Ascending aorta (tissue), 2 donors: ENCODE measurements at regions of chr18 and their contacts with region 1.

Region 1: DNA sequence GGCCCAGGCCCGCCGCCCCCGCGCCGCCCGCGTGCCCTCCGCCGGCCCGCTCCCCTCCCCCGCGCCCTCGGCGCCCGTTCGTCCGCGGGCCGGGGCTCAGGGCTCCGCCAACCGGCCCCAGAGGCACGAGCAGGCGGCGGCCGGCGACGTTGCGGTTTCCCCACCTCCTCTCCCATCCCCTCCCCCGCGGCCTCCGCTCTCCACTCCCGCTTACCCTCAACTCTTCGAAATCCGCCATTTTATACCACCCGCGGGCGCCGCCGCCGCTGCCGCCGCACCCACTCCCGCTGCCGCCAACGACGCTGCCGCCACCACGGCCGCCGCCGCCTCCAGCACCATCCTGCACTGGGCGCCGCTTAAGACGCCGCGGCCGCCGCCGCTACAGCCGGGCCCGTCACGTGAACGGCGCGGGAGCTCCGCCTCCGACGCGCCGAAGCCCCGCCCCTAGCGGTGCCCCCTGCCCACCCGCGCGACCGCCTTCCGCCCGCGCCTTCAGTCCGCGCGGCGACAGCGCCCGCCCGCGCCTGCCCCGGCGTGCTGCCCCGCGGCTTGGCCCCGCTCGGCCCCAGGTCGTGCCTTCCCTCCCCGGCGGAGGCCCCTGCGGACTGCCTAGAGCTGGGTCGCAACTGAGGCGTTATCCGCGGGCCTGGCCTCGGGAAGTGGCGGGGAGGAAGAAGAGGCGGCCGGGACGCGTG is at the starts of genes KATNAL2 and PIAS2:
- DNase-seq: peak in 1 of 2 donors; percentile 87
- H3K4me3 ChIP-seq: peak within 1 kb of the TSS; percentile 73 to 90
- H3K27ac ChIP-seq: peak within 1 kb of the TSS; percentile 76 to 87
- H3K4me1 ChIP-seq: peaks cover 0 to 10% of the 10 kb centered on the region in 2 donors
- H3K27me3 ChIP-seq: no peaks in the 10 kb centered on the region
- CTCF ChIP-seq: no peak
- total RNA-seq, gene KATNAL2: not detected
- total RNA-seq, gene PIAS2: 54.5 TPM

Region 2: GRCh38 chr18:45517181-45517741 is 1400.0 kb before region 1 on chr18:
- intact Hi-C with region 1: loop called (anchors 10 kb)
- DNase-seq: peak in 1 of 2 donors; percentile 88
- H3K4me3 ChIP-seq: peak overlapping the region in 1 of 2 donors; percentile 15
- H3K27ac ChIP-seq: peak overlapping the region; percentile 81 to 91
- H3K4me1 ChIP-seq: peaks cover 14 to 54% of the 10 kb centered on the region in 2 donors
- H3K27me3 ChIP-seq: no peaks in the 10 kb centered on the region
- CTCF ChIP-seq: no peak

Region 3: DNA sequence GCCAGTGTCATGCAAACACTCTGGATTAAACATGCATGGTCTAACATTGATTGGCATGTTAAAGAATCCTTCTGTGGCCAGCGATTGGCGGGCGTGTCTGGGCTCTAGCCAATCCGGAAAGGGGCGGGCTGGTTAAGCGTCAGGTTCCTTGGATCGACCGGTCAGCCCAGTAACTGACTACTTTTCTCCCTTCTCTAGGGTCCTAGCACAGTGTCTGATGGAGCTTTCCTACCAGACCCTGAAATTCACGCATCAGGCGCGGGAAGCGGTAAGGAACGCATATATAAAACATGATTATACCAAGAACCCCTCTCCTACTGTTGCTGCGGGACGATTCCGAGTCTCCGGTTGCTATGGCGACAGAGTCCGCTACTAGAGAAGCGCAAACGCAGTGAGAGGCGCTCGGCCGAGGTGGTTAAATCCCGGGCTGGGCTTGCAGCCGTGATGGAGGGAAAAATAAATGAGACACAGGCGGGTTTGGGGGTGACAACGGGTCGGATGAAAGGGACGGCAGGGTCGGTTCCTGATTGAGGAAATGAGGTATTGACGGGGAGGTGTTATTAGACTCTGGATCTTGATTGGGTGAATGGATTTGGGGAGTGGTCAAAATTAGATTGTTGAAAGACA is 29.5 kb after region 1 on chr18:
- intact Hi-C with region 1: loop called (anchors 2 kb)
- DNase-seq: peak; percentile 11 to 84
- H3K4me3 ChIP-seq: peak overlapping the region; percentile 72 to 83
- H3K27ac ChIP-seq: no peak overlapping the region
- H3K4me1 ChIP-seq: no peaks in the 10 kb centered on the region
- H3K27me3 ChIP-seq: no peaks in the 10 kb centered on the region
- CTCF ChIP-seq: no peak

Region 4: DNA sequence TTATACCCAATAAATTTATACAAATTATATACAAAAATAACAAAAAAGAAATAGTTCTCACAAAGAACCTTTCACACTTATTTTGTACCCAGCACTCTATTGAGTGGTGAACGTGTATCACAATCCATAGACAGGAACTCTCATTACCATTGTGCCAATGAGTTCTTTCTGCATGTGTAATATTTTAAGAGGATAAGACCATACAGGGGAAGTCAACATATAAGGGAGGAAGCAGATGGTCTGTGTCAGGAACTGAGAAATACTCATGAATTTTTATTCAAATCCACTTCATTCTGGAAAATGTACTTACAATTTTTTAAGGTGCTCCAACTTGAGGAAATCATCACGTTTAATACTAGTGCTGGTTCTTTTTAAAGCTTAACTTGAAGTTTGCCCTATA is 145.2 kb after region 1 on chr18:
- intact Hi-C with region 1: no loop called
- DNase-seq: no peak
- H3K4me3 ChIP-seq: no peak overlapping the region
- H3K27ac ChIP-seq: no peak overlapping the region
- H3K4me1 ChIP-seq: no peaks in the 10 kb centered on the region
- H3K27me3 ChIP-seq: no peaks in the 10 kb centered on the region
- CTCF ChIP-seq: no peak

Region 5: GRCh38 chr18:47075098-47075883 is 158.0 kb after region 1 on chr18:
- intact Hi-C with region 1: no loop called
- DNase-seq: no peak
- H3K4me3 ChIP-seq: no peak overlapping the region
- H3K27ac ChIP-seq: no peak overlapping the region
- H3K4me1 ChIP-seq: no peaks in the 10 kb centered on the region
- H3K27me3 ChIP-seq: no peaks in the 10 kb centered on the region
- CTCF ChIP-seq: no peak

Region 6: DNA sequence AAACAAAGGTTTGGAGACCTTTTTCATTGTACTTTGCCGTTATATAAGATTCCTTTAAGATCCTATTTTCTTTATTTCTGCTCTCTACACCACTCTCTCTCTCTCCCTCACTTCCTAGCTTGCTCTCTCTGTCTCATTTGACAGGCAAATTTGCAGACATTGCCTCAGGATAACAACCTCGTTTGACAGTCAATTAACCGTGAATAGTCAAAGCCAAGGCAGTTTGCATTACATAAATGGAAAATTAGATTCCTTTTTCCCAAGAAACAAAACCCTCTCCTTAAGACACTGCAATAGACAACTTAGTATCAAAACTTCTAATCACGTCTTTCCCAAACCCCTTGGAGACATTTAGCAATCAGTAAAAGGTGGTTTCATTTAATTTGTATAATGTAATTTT is 326.8 kb after region 1 on chr18:
- intact Hi-C with region 1: no loop called
- DNase-seq: no peak
- H3K4me3 ChIP-seq: no peak overlapping the region
- H3K27ac ChIP-seq: no peak overlapping the region
- H3K4me1 ChIP-seq: no peaks in the 10 kb centered on the region
- H3K27me3 ChIP-seq: peaks cover 4% of the 10 kb centered on the region
- CTCF ChIP-seq: no peak